PC-9 (cell line): ENCODE measurements at regions of chr6 and their contacts with region 1.

Region 1: GRCh38 chr6:47309291-47310130 is at the start of gene TNFRSF21:
- DNase-seq: peak; percentile 85 to 95
- H3K4me3 ChIP-seq: peak within 1 kb of the TSS; percentile 91
- H3K27ac ChIP-seq: peak within 1 kb of the TSS; percentile 90
- H3K4me1 ChIP-seq: peaks cover 32% of the 10 kb centered on the region
- H3K27me3 ChIP-seq: no peaks in the 10 kb centered on the region
- CTCF ChIP-seq: peak; percentile 87
- total RNA-seq, gene TNFRSF21: 172 and 219 TPM in 2 replicates

Region 2: GRCh38 chr6:46719099-46719498 is 590.4 kb before region 1 on chr6:
- CTCF ChIA-PET with region 1: no interaction called
- POLR2A ChIA-PET with region 1: no interaction called
- intact Hi-C with region 1: loop called (anchors 10 kb)
- DNase-seq: peak; percentile 8 to 74
- H3K4me3 ChIP-seq: no peak overlapping the region
- H3K27ac ChIP-seq: no peak overlapping the region
- H3K4me1 ChIP-seq: no peaks in the 10 kb centered on the region
- H3K27me3 ChIP-seq: no peaks in the 10 kb centered on the region
- CTCF ChIP-seq: no peak

Region 3: GRCh38 chr6:46993846-46994245 is 315.7 kb before region 1 on chr6:
- CTCF ChIA-PET with region 1: no interaction called
- POLR2A ChIA-PET with region 1: no interaction called
- intact Hi-C with region 1: loop called (anchors 1 kb)
- DNase-seq: peak; percentile 62 to 98
- H3K4me3 ChIP-seq: no peak overlapping the region
- H3K27ac ChIP-seq: peak overlapping the region; percentile 70
- H3K4me1 ChIP-seq: peaks cover 57% of the 10 kb centered on the region
- H3K27me3 ChIP-seq: no peaks in the 10 kb centered on the region
- CTCF ChIP-seq: no peak

Region 4: DNA sequence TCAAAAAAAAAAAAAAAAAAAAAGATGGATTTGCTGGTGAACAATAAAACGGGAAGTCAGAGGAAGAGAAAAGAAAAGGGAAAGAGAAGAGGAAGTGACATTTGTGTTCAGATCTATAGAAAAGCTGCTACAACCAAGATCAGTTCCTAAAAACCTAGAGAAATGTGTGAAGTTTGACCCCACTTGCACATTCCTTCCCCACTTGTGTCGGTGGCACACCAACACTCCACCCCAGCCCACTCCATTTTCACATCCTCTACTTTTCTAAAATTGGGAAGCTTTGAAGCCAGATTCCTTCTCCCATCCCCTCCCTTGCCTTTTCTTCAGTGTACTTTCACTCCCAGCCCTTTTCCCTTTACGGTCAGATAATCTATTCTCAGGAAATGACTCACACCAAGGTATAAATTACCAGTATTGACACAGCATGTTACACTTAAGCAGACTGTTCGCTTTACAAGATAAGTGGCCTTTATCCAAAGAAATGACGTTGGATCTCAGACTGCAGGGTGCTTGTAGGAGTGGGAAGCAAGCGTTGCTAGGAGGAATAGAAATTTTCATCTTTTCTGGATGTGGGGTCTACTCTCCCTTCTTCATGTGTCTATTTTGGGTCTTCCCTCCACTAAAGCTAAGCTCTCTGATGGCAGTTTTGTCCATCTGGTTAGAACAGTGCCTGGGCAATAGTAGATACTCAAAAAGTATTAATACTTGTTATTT is 174.9 kb before region 1 on chr6:
- CTCF ChIA-PET with region 1: no interaction called
- POLR2A ChIA-PET with region 1: no interaction called
- intact Hi-C with region 1: loop called (anchors 1 kb)
- DNase-seq: peak; percentile 46 to 98
- H3K4me3 ChIP-seq: peak overlapping the region; percentile 43; the same call in 1 of the 2 replicates
- H3K27ac ChIP-seq: peak overlapping the region; percentile 100
- H3K4me1 ChIP-seq: peaks cover 73% of the 10 kb centered on the region
- H3K27me3 ChIP-seq: no peaks in the 10 kb centered on the region
- CTCF ChIP-seq: no peak

Region 5: GRCh38 chr6:47188588-47189021 is 120.9 kb before region 1 on chr6:
- CTCF ChIA-PET with region 1: no interaction called
- POLR2A ChIA-PET with region 1: interaction called, 9 read pairs
- intact Hi-C with region 1: loop called (anchors 1 kb)
- DNase-seq: peak; percentile 71 to 99
- H3K4me3 ChIP-seq: 0 out of 2 replicates have a peak overlapping the region, but pooled peaks have one; percentile 2
- H3K27ac ChIP-seq: peak overlapping the region; percentile 93
- H3K4me1 ChIP-seq: peaks cover 56% of the 10 kb centered on the region
- H3K27me3 ChIP-seq: no peaks in the 10 kb centered on the region
- CTCF ChIP-seq: no peak